Naive thymus-derived CD4-positive, alpha-beta T cell (primary cell): ENCODE measurements at regions of chr1 and their contacts with region 1.

Region 1: DNA sequence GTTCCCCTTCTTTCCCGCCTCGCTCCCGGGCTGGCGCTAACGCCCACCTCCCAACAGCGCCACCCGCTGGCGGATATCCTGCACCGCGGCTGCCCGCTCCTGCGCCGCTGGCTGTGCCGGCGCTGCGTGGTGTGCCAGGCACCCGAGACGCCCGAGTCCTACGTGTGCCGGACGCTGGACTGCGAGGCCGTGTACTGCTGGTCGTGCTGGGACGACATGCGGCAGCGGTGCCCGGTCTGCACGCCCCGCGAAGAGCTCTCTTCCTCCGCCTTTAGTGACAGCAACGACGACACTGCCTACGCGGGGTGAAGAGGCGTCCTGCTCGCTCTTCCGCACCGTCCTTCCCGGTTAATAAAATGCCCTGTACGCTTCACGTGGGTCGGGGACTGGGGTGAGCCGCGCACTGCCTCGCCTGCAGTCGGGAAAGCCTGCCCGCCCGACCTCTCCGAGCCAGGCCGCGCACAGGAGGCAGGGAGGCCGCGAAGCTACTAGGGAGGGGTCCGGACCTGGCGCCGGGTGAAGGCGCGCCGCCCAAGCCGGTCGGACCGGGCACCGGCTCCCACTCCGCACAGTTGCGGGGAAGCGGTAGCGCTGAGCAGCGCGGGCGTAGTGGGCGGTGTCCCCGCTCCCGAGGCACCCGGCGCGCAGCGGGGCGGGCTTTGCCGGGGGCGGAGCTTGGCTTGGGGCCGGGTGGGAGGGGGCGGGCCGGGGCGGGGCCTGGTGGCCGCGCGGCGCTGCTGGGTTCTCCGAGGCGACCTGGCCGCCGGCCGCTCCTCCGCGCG is at the start of gene ADAM15:
- DNase-seq: peak; percentile 56 to 88 (median 74)
- ATAC-seq: peak; percentile 90
- H3K4me3 ChIP-seq: peak within 1 kb of the TSS; percentile 66
- H3K4me3 Mint-ChIP-seq: peak within 1 kb of the TSS; percentile 74 to 91 (median 88)
- H3K27ac ChIP-seq: peak within 1 kb of the TSS; percentile 72
- H3K27ac Mint-ChIP-seq: peak within 1 kb of the TSS in 8 of 9 donors; percentile 47 to 85 (median 70)
- H3K4me1 ChIP-seq: peaks cover 5 to 13% of the 10 kb centered on the region in 2 donors
- H3K4me1 Mint-ChIP-seq: peaks cover 14 to 31% (median 23%) of the 10 kb centered on the region in 7 donors
- H3K27me3 ChIP-seq: no peaks in the 10 kb centered on the region
- H3K27me3 Mint-ChIP-seq: no peaks in the 10 kb centered on the region
- total RNA-seq, gene ADAM15: 16.9 to 53.7 (median 28.8) TPM

Region 2: DNA sequence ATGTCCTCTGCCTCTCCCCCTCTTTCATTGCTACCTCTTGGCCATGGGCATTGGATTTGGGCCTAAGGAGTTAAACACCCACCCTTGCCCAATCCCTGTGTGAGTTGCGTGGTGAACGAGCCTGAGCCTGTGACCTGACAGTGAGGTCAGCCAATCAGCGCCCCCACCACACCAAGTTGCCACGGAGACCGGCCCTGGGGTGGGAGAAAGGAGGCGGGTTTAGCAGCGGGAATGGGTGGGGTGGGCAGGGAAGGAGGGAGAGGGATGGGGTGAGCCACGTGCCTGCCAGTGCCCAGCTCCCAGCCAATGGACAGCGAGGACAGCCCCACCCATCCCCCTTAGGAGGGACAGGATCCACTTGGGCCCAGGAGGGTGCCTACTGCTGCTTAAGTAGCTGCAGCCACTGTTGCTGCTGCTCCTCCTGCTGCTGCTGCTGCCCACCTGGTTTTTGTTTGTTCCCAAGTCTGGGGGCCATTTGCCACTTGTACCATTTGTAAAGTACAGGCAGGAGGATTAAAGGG is 38.7 kb before region 1 on chr1:
- CTCF ChIA-PET with region 1: interaction called, 6 read pairs
- POLR2A ChIA-PET with region 1: interaction called, 3 read pairs
- intact Hi-C with region 1: loop called (anchors 2 to 5 kb)
- DNase-seq: peak in 1 of 9 donors; percentile 56
- ATAC-seq: peak; percentile 7
- H3K4me3 ChIP-seq: peak overlapping the region; percentile 38
- H3K4me3 Mint-ChIP-seq: peak overlapping the region; percentile 75 to 99 (median 90)
- H3K27ac ChIP-seq: peak overlapping the region; percentile 83
- H3K27ac Mint-ChIP-seq: peak overlapping the region; percentile 80 to 98 (median 95)
- H3K4me1 ChIP-seq: peaks cover 56 to 71% of the 10 kb centered on the region in 2 donors
- H3K4me1 Mint-ChIP-seq: peaks cover 30 to 78% (median 63%) of the 10 kb centered on the region in 7 donors
- H3K27me3 ChIP-seq: no peaks in the 10 kb centered on the region
- H3K27me3 Mint-ChIP-seq: no peaks in the 10 kb centered on the region